CD8-positive, alpha-beta T cell (primary cell): ENCODE measurements at regions of chr10 and their contacts with region 1.

Region 1: DNA sequence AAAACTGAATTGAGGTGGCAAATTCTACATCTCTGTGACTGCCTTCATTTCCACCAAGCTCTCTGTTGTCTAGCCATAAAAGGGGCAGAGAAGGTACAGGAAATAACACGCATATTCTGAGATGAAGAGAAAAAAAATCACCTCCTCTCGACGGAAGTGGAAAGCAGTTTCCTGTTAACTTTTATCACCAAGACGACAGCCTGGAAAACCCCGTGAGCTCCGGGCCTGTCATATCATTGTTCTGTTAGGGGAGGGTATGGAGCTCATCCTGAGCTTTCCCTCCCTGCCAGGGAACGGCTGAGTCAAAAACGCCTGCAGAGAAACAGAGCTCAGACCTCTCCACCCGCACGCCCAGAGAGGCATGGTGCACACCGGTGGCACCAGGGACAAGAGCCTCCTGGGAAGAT is 200.3 kb downstream of the PRPF18 start:
- DNase-seq: peak; percentile 54 to 97 (median 75)
- ATAC-seq: peak; percentile 85
- H3K4me3 ChIP-seq: peak overlapping the region; percentile 23 to 28
- H3K4me3 Mint-ChIP-seq: peak overlapping the region; percentile 82
- H3K27ac ChIP-seq: peak overlapping the region; percentile 82 to 97
- H3K27ac Mint-ChIP-seq: no peak overlapping the region
- H3K4me1 ChIP-seq: peaks cover 47% of the 10 kb centered on the region
- H3K4me1 Mint-ChIP-seq: peaks cover 32% of the 10 kb centered on the region
- H3K27me3 ChIP-seq: no peaks in the 10 kb centered on the region
- H3K27me3 Mint-ChIP-seq: no peaks in the 10 kb centered on the region
- CTCF ChIP-seq: no peak

Region 2: GRCh38 chr10:12681252-12681651 is 1105.8 kb before region 1 on chr10:
- CTCF ChIA-PET with region 1: no interaction called
- POLR2A ChIA-PET with region 1: no interaction called
- intact Hi-C with region 1: no loop called
- DNase-seq: peak in 3 of 9 experiments; percentile 7 to 51 (median 18)
- ATAC-seq: peak; percentile 40
- H3K4me3 ChIP-seq: no peak overlapping the region
- H3K4me3 Mint-ChIP-seq: peak overlapping the region; percentile 49
- H3K27ac ChIP-seq: no peak overlapping the region
- H3K27ac Mint-ChIP-seq: no peak overlapping the region
- H3K4me1 ChIP-seq: no peaks in the 10 kb centered on the region
- H3K4me1 Mint-ChIP-seq: peaks cover 7% of the 10 kb centered on the region
- H3K27me3 ChIP-seq: no peaks in the 10 kb centered on the region
- H3K27me3 Mint-ChIP-seq: no peaks in the 10 kb centered on the region
- CTCF ChIP-seq: no peak

Region 3: GRCh38 chr10:14009371-14010100 is 222.5 kb after region 1 on chr10:
- CTCF ChIA-PET with region 1: no interaction called
- POLR2A ChIA-PET with region 1: no interaction called
- intact Hi-C with region 1: loop called (anchors 2 kb)
- DNase-seq: peak; percentile 27 to 92 (median 61)
- ATAC-seq: peak; percentile 84
- H3K4me3 ChIP-seq: peak overlapping the region; percentile 37 to 42
- H3K4me3 Mint-ChIP-seq: peak overlapping the region; percentile 84
- H3K27ac ChIP-seq: peak overlapping the region; percentile 23 to 34
- H3K27ac Mint-ChIP-seq: peak overlapping the region; percentile 91
- H3K4me1 ChIP-seq: peaks cover 33% of the 10 kb centered on the region
- H3K4me1 Mint-ChIP-seq: peaks cover 44% of the 10 kb centered on the region
- H3K27me3 ChIP-seq: no peaks in the 10 kb centered on the region
- H3K27me3 Mint-ChIP-seq: no peaks in the 10 kb centered on the region
- CTCF ChIP-seq: no peak

Region 4: DNA sequence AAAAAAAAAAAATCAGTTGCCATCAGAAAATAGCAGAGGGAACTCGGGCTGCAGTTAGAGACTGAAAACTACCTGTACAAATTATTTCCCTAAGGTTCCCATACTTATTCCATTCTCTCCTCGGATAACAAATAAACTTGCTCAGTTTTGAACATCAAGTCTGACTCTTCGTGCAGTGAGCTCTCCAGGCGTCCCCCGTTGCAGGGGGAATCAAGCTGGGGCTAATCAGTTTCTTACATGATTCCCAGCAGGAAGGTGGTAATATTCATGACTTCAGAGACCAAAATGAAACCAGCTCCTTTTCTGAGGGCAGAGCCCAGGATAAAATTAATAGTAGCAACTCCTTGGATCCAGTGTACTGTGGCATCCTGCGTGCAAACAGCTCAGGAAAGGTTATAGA is 408.4 kb after region 1 on chr10:
- CTCF ChIA-PET with region 1: interaction called, 5 read pairs
- POLR2A ChIA-PET with region 1: no interaction called
- intact Hi-C with region 1: loop called in 1 of 2 experiments (anchors 2 kb)
- DNase-seq: no peak
- ATAC-seq: no peak
- H3K4me3 ChIP-seq: no peak overlapping the region
- H3K4me3 Mint-ChIP-seq: no peak overlapping the region
- H3K27ac ChIP-seq: no peak overlapping the region
- H3K27ac Mint-ChIP-seq: no peak overlapping the region
- H3K4me1 ChIP-seq: no peaks in the 10 kb centered on the region
- H3K4me1 Mint-ChIP-seq: no peaks in the 10 kb centered on the region
- H3K27me3 ChIP-seq: peaks cover 2 to 3% of the 10 kb centered on the region in 2 experiments
- H3K27me3 Mint-ChIP-seq: peaks cover 36% of the 10 kb centered on the region
- CTCF ChIP-seq: no peak

Region 5: GRCh38 chr10:14439451-14440259 is 652.6 kb after region 1 on chr10:
- CTCF ChIA-PET with region 1: no interaction called
- POLR2A ChIA-PET with region 1: no interaction called
- intact Hi-C with region 1: no loop called
- DNase-seq: no peak
- ATAC-seq: no peak
- H3K4me3 ChIP-seq: no peak overlapping the region
- H3K4me3 Mint-ChIP-seq: no peak overlapping the region
- H3K27ac ChIP-seq: no peak overlapping the region
- H3K27ac Mint-ChIP-seq: no peak overlapping the region
- H3K4me1 ChIP-seq: no peaks in the 10 kb centered on the region
- H3K4me1 Mint-ChIP-seq: no peaks in the 10 kb centered on the region
- H3K27me3 ChIP-seq: peaks cover 3% of the 10 kb centered on the region in 2 experiments
- H3K27me3 Mint-ChIP-seq: peaks cover 21% of the 10 kb centered on the region
- CTCF ChIP-seq: no peak

Region 6: DNA sequence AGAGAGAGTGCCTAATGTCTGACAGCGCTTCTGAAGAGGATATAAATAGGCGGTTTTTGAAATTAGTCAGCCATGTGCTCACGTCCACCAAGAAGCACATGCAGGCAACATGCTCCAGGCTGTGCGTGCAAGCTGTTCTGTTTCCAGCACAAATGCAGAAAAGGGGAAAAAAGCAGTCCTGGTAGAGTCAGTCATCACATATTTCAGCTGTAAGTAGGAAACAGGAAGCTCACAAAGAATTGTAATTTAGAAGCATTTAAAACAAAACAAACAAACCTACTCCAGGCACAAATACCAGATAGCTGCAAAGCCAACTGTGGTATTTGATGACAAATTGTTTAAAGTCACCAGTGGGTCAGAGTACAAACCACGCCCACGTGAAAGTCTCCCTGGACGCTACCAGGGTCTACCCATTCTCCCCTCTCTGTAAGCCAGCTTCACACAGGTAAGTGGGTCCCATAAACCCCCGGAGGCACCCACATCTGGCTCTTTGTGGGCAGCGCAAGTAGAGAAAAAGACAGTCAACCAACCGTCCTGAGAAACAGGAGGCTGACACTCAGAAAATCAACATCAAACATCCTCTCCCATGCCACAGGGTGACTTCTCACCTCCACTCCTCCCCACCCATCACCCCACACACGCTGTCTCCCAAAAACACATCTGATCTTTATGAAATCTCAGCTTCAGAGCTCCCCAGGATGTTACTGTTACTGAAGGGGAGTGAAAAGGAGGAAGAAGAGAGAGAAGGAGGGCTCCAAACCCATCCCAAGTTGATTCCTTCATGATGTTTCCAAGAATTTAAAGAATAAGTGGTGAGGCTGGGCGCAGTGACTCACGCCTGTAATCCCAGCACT is 801.3 kb after region 1 on chr10:
- CTCF ChIA-PET with region 1: no interaction called
- POLR2A ChIA-PET with region 1: no interaction called
- intact Hi-C with region 1: loop called in 1 of 2 experiments (anchors 10 kb)
- DNase-seq: peak in 3 of 9 experiments; percentile 55 to 79 (median 65)
- ATAC-seq: peak; percentile 35
- H3K4me3 ChIP-seq: peak overlapping the region; percentile 32 to 34
- H3K4me3 Mint-ChIP-seq: peak overlapping the region; percentile 78
- H3K27ac ChIP-seq: peak overlapping the region; percentile 71 to 82
- H3K27ac Mint-ChIP-seq: peak overlapping the region; percentile 97
- H3K4me1 ChIP-seq: peaks cover 89% of the 10 kb centered on the region
- H3K4me1 Mint-ChIP-seq: peaks cover 92% of the 10 kb centered on the region
- H3K27me3 ChIP-seq: no peaks in the 10 kb centered on the region
- H3K27me3 Mint-ChIP-seq: no peaks in the 10 kb centered on the region
- CTCF ChIP-seq: no peak

Region 7: GRCh38 chr10:14822879-14823755 is 1036.1 kb after region 1 on chr10:
- CTCF ChIA-PET with region 1: no interaction called
- POLR2A ChIA-PET with region 1: no interaction called
- intact Hi-C with region 1: loop called in 1 of 2 experiments (anchors 5 kb)
- DNase-seq: peak in 8 of 9 experiments; percentile 6 to 63 (median 36)
- ATAC-seq: no peak
- H3K4me3 ChIP-seq: no peak overlapping the region
- H3K4me3 Mint-ChIP-seq: no peak overlapping the region
- H3K27ac ChIP-seq: no peak overlapping the region
- H3K27ac Mint-ChIP-seq: no peak overlapping the region
- H3K4me1 ChIP-seq: no peaks in the 10 kb centered on the region
- H3K4me1 Mint-ChIP-seq: peaks cover 2% of the 10 kb centered on the region
- H3K27me3 ChIP-seq: no peaks in the 10 kb centered on the region
- H3K27me3 Mint-ChIP-seq: no peaks in the 10 kb centered on the region
- CTCF ChIP-seq: peak; percentile 75

Region 8: DNA sequence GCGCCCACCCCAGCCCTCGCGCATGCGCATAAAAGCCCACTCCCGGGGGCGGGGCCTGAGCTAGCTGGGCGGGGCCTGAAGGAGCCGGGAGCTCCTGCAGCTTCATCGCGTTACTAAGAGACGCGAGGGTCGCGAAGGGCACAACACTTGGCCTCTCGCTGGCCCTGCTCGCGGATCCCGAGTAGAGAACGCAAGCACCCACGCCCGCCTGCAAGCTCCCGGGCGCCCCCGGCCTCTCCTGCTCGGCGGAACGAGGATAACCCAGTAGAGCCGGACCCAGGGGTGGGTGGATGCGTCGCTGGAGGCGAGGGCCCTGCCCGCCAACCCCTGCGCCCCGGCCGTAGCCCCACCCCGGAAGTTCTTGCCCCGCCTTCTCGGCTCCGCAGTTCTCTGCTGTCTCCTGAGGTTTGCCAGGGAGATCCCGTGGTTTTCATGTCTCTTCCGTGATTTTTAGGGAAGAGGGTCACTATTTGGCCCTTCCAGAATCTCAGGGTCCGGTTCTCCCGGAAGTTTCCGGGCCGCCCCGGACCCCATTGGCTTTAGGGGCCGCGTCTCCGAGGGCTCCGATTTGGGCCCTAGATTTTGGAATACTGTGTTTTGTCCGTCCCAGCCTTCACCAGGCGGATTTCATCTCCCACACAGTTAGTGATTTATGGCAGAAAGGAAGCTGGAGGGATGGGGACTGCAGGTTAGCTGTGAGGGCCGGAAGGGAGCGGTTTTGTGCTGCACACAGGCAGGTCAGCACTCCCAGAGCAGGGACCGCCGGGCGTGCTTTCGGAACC is 1172.4 kb after region 1 on chr10 and contains the start of gene MEIG1:
- CTCF ChIA-PET with region 1: no interaction called
- POLR2A ChIA-PET with region 1: no interaction called
- intact Hi-C with region 1: loop called in 1 of 2 experiments (anchors 5 kb)
- DNase-seq: peak; percentile 79 to 98 (median 92)
- ATAC-seq: peak; percentile 83
- H3K4me3 ChIP-seq: peak within 1 kb of the TSS; percentile 77 to 95
- H3K4me3 Mint-ChIP-seq: peak within 1 kb of the TSS; percentile 97
- H3K27ac ChIP-seq: peak within 1 kb of the TSS; percentile 86 to 88
- H3K27ac Mint-ChIP-seq: peak within 1 kb of the TSS; percentile 95
- H3K4me1 ChIP-seq: peaks cover 11% of the 10 kb centered on the region
- H3K4me1 Mint-ChIP-seq: peaks cover 24% of the 10 kb centered on the region
- H3K27me3 ChIP-seq: no peaks in the 10 kb centered on the region
- H3K27me3 Mint-ChIP-seq: no peaks in the 10 kb centered on the region
- CTCF ChIP-seq: no peak
- total RNA-seq, gene MEIG1: not detected